Stomach (tissue), 19 donors: ENCODE measurements at regions of chr6 and their contacts with region 1.

Region 1: DNA sequence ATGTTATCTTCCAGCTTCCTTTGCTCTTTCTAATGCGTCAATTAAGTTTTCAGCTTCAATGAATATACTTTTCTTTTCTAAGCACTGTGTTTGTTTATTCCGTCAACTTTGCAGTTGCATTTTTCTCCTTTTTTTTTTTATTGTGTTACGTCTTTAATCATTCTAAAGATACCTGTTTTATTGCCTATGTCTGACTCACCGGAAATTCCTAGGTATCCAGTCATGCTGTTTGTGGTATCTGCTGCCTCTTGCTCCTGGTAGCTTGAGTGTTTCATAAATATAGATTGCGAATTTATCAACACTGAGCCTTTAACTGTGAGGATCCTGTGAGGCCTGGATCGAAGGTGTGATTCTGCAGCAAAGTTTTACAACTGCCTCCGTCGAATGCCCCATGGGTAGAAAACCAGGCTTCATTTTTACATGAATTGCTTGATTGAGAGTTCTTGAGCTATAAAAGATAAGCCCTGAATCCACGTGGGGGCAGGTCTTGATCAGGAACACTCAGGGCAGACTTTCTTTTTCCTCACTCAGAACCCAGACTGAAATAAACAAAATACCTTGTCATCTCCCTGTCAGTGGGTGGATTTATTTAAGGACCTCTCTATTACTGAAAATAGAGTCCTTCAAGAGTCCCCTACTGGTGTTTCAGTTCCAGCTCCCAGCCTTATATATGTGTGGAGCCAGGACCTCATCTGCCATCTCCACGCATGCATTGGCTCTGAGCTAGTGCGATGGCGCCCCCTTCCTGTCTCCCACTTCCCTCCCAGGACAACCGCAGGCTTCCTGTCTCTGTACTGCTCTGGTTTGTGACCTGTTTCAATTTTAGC is 60.1 kb upstream of the LRRC1 start:
- DNase-seq: peak; percentile 54 to 60
- H3K4me3 ChIP-seq: no peak overlapping the region
- H3K27ac ChIP-seq: no peak overlapping the region
- H3K4me1 ChIP-seq: peaks cover 0 to 17% (median 4%) of the 10 kb centered on the region in 4 donors
- H3K27me3 ChIP-seq: no peaks in the 10 kb centered on the region
- CTCF ChIP-seq: no peak
- EP300 ChIP-seq: no peak
- POLR2A ChIP-seq: no peak

Region 2: GRCh38 chr6:53496797-53497375 is 237.8 kb before region 1 on chr6:
- intact Hi-C with region 1: loop called (anchors 5 kb)
- DNase-seq: no peak
- H3K4me3 ChIP-seq: no peak overlapping the region
- H3K27ac ChIP-seq: peak overlapping the region in 1 of 5 donors; percentile 29
- H3K4me1 ChIP-seq: peaks cover 0 to 47% (median 21%) of the 10 kb centered on the region in 4 donors
- H3K27me3 ChIP-seq: no peaks in the 10 kb centered on the region
- CTCF ChIP-seq: no peak
- EP300 ChIP-seq: no peak
- POLR2A ChIP-seq: no peak

Region 3: DNA sequence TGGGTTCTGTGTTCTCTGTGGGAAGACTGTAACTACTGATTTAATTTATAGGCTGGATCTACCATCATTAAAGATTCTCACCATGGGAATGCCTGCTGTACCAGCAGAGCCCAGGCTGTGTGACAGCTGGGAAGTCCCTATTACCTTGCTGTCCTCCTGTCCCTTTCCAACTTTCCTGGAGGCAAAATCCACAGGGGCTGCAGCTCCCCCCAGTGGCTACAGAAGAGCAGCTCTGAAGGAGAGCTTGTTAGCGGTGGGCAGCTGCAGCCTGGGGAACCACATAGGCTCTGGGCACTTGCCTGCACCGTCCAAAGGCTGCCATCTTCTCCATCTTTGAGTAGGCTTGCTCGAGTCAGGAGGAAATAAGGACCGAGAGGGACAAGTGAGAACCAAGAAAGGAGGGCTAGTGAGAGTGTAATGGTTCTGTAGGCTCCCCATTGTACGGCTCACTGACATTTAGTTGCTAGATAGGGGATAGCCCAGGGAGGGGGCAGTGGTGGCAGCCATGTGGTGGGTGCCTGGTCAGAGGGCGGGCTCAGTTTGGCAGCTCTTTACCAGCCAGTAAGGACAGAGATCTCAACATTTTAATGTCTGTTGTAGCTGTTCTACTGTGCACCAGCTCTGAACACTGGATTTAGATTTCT is 221.5 kb after region 1 on chr6:
- intact Hi-C with region 1: no loop called
- DNase-seq: peak; percentile 77 to 89
- H3K4me3 ChIP-seq: no peak overlapping the region
- H3K27ac ChIP-seq: no peak overlapping the region
- H3K4me1 ChIP-seq: peaks cover 0 to 5% (median 0%) of the 10 kb centered on the region in 4 donors
- H3K27me3 ChIP-seq: no peaks in the 10 kb centered on the region
- CTCF ChIP-seq: peak in 5 of 7 experiments; percentile 52 to 70 (median 65)
- EP300 ChIP-seq: no peak
- POLR2A ChIP-seq: no peak